AG04449 (cell line): ENCODE measurements at regions of chr22 and their contacts with region 1.

Region 1: GRCh38 chr22:29245637-29246385 is 22.0 kb downstream of the RHBDD3 start:
- DNase-seq: no peak
- H3K4me3 ChIP-seq: no peak overlapping the region
- CTCF ChIP-seq: peak; percentile 97

Region 2: DNA sequence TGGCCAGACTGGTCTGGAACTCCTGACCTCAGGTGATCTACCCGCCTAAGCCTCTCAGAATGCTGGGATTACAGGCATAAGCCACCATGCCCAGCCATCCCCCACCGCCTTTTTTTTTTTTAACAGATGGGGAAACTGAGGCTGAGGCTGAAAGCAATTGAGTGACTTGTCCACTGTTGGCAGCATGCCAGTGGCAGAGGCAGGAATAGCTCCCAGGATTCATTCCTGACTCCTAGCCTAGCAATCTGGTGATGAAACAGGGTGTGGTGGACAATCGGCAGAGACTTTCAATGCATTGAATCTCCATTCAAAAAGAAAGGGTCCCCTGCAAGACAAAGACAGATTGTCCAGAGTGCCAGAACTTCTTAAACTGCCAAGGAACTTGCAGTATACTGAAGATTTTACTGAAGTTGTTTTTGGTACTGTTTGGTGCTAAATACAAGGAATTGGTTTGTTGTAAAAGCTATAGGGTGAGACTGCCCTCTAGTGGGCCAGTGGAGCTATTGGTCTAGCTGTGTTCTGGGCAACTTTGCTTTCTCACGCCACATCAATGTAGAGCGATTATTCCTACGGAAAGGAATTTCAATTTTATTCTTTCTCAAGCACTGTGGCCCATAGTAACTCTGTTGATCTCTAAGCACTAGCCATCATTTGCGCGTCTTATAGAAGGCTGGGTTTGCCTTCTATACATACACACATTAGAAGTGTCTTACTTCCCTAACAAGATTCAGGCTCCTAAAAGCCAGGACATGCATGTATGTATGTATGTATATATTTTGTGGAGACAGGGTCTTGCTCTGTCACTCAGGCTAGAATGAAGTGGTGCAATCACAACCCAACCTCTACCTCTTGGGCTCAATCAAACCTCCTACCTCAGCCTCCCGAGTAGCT is 205.2 kb before region 1 on chr22:
- CTCF ChIA-PET with region 1: interaction called, 43 read pairs
- POLR2A ChIA-PET with region 1: no interaction called
- DNase-seq: peak; percentile 74
- H3K4me3 ChIP-seq: no peak overlapping the region
- CTCF ChIP-seq: peak; percentile 82

Region 3: DNA sequence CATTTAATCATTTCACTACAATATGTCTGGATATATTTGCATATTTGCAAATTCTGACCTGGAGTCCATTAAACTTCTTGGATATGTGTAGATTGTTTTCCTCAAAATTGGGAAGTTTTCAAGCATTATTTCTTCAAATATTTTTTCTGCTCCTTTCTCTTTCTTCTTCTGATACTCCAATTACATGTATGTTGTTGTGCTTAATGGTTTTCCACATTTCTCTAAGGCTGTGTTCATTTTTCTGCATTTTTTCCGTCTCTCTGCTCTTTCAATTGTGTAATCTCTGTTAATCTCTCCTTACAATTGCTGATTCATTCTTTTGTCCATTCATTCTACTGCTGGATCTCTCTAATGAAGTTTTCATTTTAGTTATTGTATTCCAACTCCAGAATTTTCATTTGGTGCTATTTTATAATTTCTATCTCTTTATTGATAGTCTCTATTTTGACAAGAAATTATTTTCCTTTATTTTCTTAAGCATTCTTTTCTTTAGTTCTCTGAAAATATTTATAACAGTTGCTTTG is 70.4 kb before region 1 on chr22:
- CTCF ChIA-PET with region 1: no interaction called
- POLR2A ChIA-PET with region 1: no interaction called
- DNase-seq: no peak
- H3K4me3 ChIP-seq: no peak overlapping the region
- CTCF ChIP-seq: no peak

Region 4: GRCh38 chr22:29225422-29226131 is 20.2 kb before region 1 on chr22:
- CTCF ChIA-PET with region 1: interaction called, 19 read pairs
- POLR2A ChIA-PET with region 1: interaction called, 5 read pairs
- DNase-seq: no peak
- H3K4me3 ChIP-seq: no peak overlapping the region
- CTCF ChIP-seq: no peak

Region 5: GRCh38 chr22:29259253-29259899 is 13.6 kb after region 1 on chr22:
- CTCF ChIA-PET with region 1: interaction called, 41 read pairs
- POLR2A ChIA-PET with region 1: no interaction called
- DNase-seq: no peak
- H3K4me3 ChIP-seq: no peak overlapping the region
- CTCF ChIP-seq: no peak

Region 6: GRCh38 chr22:29277927-29278326 is 32.1 kb after region 1 on chr22:
- CTCF ChIA-PET with region 1: no interaction called
- POLR2A ChIA-PET with region 1: no interaction called
- DNase-seq: no peak
- H3K4me3 ChIP-seq: no peak overlapping the region
- CTCF ChIP-seq: no peak